Activated naive CD4-positive, alpha-beta T cell treated with anti-CD3 and anti-CD28 coated beads, Interleukin-2, amount 10 ng/mL, durations not matched to agents 7 days and 5 days (primary cell): ENCODE measurements at regions of chr14 and their contacts with region 1.

Region 1: DNA sequence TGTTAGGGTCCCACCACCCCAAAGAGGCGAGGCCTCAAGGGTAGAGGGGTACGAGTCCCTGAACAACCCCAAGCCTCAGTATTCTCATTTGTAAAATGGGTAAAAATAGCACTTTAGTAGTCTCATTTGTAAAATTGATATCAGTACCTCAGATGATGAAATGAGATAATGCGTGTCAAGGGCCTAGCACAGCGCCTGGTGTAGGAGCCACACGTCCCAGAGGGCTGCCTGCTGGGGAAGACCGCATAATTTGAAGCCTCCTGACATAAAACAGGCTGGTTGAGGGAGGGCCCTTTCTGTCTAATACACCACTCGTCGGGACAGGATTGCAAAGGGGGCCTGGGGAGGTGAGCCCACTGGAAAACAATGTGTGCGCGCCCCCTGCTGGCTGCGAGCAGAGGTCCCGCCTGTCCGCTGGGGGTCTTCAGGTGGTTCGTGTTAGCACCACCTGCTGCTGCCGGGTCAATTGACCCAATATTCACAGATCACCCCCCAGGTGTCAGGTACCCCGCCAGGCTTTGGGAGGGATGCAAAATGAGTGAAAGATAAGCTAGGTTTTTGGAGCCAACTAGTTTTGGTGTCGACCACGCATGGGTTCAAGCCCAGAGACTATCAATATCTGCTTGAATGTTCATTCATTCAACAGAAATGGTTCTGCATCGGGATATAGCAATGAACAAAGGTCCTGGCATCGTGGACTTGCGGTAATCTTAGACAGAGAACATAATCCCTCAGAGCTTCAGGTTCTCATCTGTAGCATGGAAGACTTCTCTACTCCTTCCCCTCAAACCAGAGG is 24.7 kb upstream of the IRF2BPL start:
- DNase-seq: peak; percentile 82
- H3K4me3 Mint-ChIP-seq: no peak overlapping the region
- H3K27ac Mint-ChIP-seq: no peak overlapping the region
- H3K4me1 Mint-ChIP-seq: peaks cover 28% of the 10 kb centered on the region
- H3K27me3 Mint-ChIP-seq: no peaks in the 10 kb centered on the region

Region 2: GRCh38 chr14:76904740-76905438 is 148.4 kb before region 1 on chr14:
- CTCF ChIA-PET with region 1: interaction called, 183 read pairs
- DNase-seq: peak; percentile 67
- H3K4me3 Mint-ChIP-seq: no peak overlapping the region
- H3K27ac Mint-ChIP-seq: peak overlapping the region; percentile 53
- H3K4me1 Mint-ChIP-seq: peaks cover 42% of the 10 kb centered on the region
- H3K27me3 Mint-ChIP-seq: peaks cover 33% of the 10 kb centered on the region

Region 3: DNA sequence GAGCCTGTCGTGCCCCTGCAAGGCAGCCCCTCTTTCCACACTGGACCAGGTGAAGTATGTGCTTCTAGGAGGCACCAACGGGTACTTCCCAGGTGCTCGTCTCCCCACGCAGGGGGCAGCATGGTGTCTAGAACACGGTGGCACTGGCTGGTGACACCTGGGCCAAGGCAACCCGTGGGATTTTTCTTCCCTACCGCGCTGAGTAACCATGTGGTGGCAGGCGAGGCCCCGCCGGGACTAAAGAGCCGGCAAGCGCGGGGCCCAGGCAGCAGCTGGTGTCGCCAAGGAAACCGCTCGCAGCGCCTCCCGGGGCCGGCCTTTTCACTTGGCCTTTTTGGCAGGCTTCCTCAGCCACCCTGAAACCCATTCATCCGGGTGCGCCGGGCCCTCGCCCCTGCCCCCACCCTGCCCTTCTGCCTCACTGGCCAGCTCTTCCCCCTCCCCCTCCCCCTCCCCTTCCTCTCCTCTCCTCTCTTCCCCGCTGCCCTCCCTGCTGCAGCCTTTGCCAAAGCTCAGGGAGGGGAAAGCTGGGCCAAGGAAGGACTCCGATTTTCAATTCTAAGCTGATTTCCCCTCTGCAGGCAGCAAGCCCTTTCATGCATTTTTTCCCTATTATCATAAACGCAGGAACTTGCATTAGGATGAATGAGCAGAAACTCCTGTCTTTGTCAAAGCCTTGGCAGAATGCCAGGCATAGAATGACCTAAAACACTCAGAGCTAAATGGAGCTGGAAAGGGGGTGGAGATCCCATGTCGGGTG is 106.0 kb before region 1 on chr14:
- CTCF ChIA-PET with region 1: interaction called, 49 read pairs
- DNase-seq: peak; percentile 86
- H3K4me3 Mint-ChIP-seq: no peak overlapping the region
- H3K27ac Mint-ChIP-seq: peak overlapping the region; percentile 81
- H3K4me1 Mint-ChIP-seq: peaks cover 54% of the 10 kb centered on the region
- H3K27me3 Mint-ChIP-seq: no peaks in the 10 kb centered on the region

Region 4: GRCh38 chr14:77028384-77029231 is 24.6 kb before region 1 on chr14 and contains the start of gene IRF2BPL:
- CTCF ChIA-PET with region 1: interaction called, 17 read pairs
- DNase-seq: peak; percentile 96
- H3K4me3 Mint-ChIP-seq: peak within 1 kb of the TSS; percentile 93
- H3K27ac Mint-ChIP-seq: peak within 1 kb of the TSS; percentile 97
- H3K4me1 Mint-ChIP-seq: peaks cover 72% of the 10 kb centered on the region
- H3K27me3 Mint-ChIP-seq: no peaks in the 10 kb centered on the region

Region 5: DNA sequence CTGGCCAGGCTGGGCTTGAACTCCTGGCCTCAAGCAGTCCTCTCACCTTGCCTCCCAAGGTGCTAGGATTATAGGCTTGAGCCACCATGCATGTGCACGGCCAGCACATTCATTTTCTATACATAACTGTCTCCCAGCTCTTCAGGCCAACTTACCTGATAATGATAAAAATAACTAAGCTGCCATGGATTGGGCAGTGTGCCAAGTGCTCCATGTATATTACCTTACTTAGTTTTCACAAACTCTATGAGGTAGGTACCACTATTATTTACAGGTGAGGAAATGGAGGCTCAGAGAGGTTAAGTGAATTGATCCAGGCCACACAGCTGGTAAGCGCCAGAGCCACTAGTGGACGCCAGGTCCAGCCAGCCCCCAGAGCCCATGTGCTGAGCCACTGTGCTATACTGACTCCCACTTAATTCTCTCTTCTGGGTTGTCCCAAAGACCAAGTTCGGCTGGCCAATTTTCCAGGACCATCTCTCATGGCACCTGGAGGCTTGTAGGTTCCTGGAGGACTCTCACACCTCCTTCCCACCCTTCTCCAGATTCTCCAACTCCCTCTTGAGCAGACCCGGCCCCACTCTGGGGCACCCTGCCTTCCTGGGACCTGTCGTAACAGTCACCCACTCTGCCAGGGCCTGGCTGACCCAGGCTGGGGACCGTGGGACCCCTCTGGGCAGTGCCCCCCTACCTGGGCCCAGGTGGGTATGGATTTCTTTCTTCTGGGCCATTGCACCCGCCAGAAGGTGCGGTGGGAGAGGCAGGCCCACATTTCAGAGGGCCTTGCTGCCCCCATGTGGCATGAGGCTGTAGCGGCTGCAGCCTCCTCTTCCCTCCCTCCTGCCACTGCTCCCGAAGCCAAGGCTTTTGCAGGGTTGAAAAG is 14.6 kb after region 1 on chr14:
- CTCF ChIA-PET with region 1: interaction called, 34 read pairs
- DNase-seq: peak; percentile 74
- H3K4me3 Mint-ChIP-seq: no peak overlapping the region
- H3K27ac Mint-ChIP-seq: no peak overlapping the region
- H3K4me1 Mint-ChIP-seq: no peaks in the 10 kb centered on the region
- H3K27me3 Mint-ChIP-seq: peaks cover 54% of the 10 kb centered on the region

Region 6: DNA sequence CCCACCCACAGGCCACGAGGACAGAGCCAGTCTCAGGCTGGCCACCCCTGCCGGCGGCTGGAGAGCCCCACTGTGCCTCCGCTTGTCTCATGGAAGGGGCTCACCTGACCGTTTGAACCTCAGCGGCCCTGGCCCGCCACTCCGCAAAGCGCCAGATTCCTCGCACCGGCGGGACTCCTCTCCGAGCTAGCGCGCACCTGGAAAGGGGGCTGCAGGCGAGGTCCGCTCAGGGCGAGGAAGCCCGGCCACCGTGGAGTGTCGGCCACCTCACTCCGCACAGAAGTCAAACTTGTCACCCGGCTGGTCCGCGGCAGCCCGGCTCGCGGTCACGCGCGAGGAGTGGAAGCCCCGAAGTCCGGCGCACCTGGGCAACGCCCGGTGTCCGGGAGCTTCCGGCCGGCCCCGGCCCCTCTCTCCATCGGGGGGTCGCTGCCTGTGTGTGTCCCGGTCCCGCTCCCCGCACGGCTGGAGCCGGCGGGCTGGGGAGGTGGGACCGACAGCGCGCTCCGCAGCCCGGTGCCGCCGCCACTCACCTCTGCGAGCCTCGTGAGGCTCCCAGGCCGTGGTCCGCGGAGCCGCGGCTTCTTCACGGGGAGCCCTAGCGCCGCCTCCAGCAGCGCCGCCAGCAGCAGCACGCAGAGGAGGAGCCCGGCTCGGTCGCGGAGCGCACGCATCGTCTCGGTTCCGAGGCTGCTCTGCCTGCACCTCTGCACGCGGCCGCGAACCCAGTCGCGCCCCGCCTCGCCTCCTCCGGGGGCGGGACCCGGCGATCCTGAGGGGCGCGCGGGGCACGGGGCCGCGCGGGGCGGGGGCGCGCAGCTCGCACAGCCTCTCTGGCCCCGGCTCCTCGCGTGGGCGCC is 445.1 kb after region 1 on chr14 and contains the start of gene ISM2:
- CTCF ChIA-PET with region 1: no interaction called
- DNase-seq: peak; percentile 72
- H3K4me3 Mint-ChIP-seq: peak within 1 kb of the TSS; percentile 63
- H3K27ac Mint-ChIP-seq: no peak within 1 kb of the TSS
- H3K4me1 Mint-ChIP-seq: peaks cover 7% of the 10 kb centered on the region
- H3K27me3 Mint-ChIP-seq: peaks cover 73% of the 10 kb centered on the region